ENCODE measurements at regions of chr18 and their contacts with region 1.

Region 1: DNA sequence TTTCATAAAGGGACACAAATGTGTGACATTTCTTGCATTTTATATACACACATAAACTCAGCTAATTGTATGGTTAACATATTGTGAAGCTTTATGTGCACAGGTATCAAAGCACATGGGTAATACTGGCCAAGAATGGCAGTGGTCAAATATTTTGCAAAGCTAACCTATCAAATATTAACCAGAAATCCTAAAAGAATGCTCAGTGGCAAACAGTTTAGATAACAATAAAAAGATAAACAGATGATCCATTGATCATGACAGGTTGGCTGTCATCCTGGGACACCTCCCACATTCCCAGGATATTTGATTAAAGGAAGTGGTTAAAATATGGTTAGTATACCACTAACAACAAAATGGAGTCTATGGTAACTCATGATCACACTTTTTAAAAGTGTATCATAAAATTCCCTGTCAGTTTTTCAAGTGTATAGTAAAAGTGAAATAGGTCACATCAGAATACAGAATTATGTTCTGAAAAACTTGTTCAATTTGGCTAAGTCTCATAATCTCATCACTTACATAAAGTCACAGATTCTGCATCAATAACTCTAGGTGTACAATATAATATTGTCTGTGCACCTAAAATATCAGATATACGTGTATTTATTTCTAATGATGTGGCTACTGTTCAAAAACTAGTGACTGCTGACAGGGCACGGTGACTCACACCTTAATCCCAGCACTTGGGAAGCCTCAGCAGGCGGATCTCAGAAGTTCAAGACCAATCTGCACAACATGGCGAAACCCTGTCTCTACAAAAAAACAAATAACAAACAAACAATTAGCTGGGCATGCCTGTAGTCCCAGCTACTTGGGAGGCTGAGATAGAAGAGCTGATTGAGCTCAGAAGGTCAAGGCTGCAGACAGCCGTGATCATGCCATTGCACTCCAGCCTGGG is 48.9 kb downstream of the CDH2 start:
- DNase-seq: no peak

Region 2: GRCh38 chr18:28161608-28162599 is 33.9 kb after region 1 on chr18:
- intact Hi-C with region 1: loop called (anchors 5 kb)
- DNase-seq: no peak